ENCODE measurements at regions of chr10 and their contacts with region 1.

Region 1: DNA sequence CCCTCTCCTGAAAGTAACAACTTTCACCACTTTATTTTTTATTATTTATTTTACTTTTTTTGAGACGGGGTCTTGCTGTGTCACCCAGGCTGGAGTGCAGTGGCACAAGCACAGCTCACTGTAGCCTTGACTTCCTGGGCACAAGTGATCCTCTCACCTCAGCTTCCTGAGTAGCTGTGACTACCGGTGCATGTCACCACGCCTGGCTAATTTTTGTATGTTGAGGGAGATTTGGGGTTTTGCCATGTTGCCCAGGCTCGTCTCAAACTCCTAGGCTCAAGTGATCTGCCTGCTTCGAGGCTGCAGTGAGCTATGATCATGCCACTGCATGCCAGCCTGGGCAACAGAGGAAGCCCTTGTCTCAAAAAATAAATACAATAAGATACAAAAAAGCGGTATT is 14.9 kb upstream of the SLIT1 start:
- DNase-seq: no peak
- H3K4me3 ChIP-seq: no peak overlapping the region
- CTCF ChIP-seq: no peak
- POLR2A ChIP-seq: no peak

Region 2: DNA sequence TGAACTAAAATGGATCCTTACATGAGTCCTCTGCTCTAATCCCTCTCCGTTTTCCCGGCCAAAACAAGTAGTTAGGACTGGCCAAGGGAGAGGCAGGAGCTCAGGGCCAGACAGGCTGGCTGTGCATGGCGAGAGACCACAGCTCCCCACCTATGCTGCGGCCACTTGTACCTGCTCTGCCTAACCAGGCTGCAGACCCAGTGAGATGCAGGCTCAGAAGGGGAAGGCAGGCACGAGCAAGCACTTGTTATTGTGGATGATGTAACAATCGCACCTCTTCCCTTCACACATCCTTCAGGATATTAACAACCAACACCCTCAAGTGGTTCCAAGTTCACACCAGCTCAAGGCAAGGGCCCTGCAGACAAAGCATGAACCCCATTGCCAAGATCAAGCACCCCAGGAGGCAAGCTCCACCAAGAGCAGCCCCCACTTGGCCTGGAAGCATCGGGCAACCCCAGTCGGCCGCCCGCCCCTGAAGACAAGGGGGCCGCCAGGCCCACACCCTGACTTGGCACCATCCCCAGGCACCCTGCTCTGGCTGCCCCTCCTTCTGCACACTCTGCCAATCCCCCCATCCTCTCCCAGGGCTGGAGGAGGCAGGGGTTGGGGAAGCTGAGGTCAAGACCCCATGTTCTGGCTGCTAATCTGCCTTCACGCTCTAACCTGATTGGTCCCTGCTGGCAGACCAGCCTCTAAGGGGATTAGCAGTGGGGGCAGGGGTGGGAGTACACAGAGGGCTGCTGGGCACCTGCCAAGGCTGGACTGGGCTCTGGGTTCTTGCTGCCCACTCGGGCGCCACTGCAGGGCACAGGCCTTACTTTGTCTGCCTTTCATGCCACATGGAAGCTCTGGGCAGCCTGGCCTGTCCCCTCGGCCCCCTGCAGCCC is 126.1 kb before region 1 on chr10:
- intact Hi-C with region 1: loop called (anchors 5 kb)
- DNase-seq: no peak
- H3K4me3 ChIP-seq: no peak overlapping the region
- CTCF ChIP-seq: no peak
- POLR2A ChIP-seq: no peak